Mammary epithelial cell (primary cell): ENCODE measurements at regions of chr15 and their contacts with region 1.

Region 1: GRCh38 chr15:58221591-58222241 is 83.5 kb downstream of the AQP9 start:
- DNase-seq: no peak
- H3K4me3 ChIP-seq: no peak overlapping the region
- H3K27ac ChIP-seq: no peak overlapping the region
- H3K4me1 ChIP-seq: peaks cover 8% of the 10 kb centered on the region
- H3K27me3 ChIP-seq: no peaks in the 10 kb centered on the region
- CTCF ChIP-seq: peak; percentile 57 to 83

Region 2: DNA sequence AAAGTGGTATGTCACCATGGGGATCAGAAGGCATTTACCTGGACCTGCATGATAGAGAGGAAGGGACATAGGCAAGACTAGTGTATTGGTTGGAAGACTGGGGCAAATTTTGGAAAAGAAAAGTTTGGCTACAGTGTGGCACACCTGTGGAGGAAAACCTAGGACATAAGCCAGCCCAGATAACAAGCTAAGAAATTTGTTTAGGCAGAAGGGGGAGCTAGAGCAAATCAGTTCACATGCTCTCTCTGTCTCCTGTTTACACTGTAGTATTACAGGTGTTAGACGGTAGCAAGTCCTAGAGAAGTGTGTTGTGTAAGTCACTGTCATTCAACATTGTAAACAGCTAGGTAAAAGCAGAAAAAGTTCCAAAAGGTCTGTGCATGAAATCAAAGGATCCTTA is 144.3 kb before region 1 on chr15:
- CTCF ChIA-PET with region 1: interaction called, 5 read pairs
- dilution Hi-C with region 1: no loop called
- in situ Hi-C with region 1: no loop called
- intact Hi-C with region 1: loop called (anchors 2 kb)
- DNase-seq: peak; percentile 32
- H3K4me3 ChIP-seq: no peak overlapping the region
- H3K27ac ChIP-seq: no peak overlapping the region
- H3K4me1 ChIP-seq: no peaks in the 10 kb centered on the region
- H3K27me3 ChIP-seq: no peaks in the 10 kb centered on the region
- CTCF ChIP-seq: peak; percentile 30 to 64

Region 3: DNA sequence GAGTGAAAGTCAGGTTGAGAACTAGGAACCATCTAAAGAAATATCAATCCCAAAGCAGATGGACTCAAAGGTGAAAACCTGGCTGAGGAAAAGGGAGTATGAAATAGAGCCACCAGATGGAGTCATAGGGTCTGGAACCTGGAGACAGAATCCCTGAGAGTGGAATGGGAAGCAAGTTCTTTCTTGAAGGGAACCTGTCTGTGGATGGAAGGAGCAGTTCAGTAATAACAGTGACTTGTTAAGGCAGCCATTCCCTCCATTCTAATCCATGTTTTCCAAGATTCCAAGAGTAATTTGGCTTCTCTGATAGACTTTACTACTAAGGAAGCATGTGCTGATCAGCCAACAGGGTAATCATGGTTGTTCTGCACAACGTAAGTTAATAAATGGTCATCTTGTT is 106.0 kb before region 1 on chr15:
- CTCF ChIA-PET with region 1: no interaction called
- dilution Hi-C with region 1: no loop called
- in situ Hi-C with region 1: no loop called
- intact Hi-C with region 1: loop called (anchors 1 kb)
- DNase-seq: peak; percentile 56
- H3K4me3 ChIP-seq: no peak overlapping the region
- H3K27ac ChIP-seq: no peak overlapping the region
- H3K4me1 ChIP-seq: no peaks in the 10 kb centered on the region
- H3K27me3 ChIP-seq: no peaks in the 10 kb centered on the region
- CTCF ChIP-seq: peak; percentile 37 to 59

Region 4: GRCh38 chr15:58738046-58738707 is 516.5 kb after region 1 on chr15:
- CTCF ChIA-PET with region 1: no interaction called
- dilution Hi-C with region 1: no loop called
- in situ Hi-C with region 1: no loop called
- intact Hi-C with region 1: no loop called
- DNase-seq: peak; percentile 41
- H3K4me3 ChIP-seq: no peak overlapping the region
- H3K27ac ChIP-seq: peak overlapping the region; percentile 11
- H3K4me1 ChIP-seq: peaks cover 34% of the 10 kb centered on the region
- H3K27me3 ChIP-seq: no peaks in the 10 kb centered on the region
- CTCF ChIP-seq: no peak